ENCODE measurements at regions of chr5 and their contacts with region 1.

Region 1: DNA sequence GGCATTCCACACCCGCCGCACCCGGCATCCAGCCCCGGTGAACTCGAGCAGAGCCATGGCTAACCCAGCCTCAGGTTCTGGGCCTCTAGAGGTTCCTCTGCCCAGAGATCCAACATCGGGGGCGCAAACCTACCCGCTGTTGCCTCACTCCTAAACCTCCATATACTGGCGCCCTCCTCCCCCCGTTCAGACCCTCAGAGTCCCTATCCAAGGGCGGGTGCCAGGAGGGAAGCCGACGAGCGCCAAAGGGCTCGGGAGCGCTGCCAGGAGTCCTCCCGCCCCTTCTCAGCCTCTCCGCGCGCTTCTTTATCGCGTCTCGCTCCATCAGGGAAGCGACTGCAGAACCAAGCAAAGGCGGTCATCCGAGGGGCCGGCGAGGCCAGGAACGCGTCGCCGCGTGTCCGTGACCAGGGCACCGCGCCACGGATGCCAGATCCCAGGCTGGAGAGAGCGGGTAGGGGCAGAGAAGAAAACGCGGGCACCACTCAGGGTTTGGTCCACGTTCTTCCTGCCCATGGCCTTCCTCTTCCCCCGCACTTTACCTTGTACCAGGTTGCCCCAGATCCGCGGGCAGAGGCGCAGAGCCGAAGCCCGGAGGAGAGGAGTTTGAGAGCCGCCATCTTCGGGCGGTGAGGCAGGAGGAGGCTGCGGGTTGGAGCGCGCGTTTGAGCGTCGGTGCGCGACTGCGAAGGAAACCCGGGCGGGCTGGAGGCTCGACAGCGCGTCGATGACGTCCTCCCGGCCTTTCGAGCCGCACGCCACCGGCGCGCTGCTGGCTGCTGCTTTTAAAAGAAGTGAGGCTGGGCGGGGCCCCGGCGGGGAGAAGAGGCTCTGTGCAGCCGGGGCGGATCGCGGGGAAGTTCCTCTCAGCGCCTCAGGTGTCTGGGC is at the start of gene OXCT1:
- DNase-seq: peak; percentile 76 to 89
- H3K4me3 ChIP-seq: peak within 1 kb of the TSS; percentile 67 to 83
- H3K27ac ChIP-seq: peak within 1 kb of the TSS; percentile 92 to 94
- H3K4me1 ChIP-seq: peaks cover 0 to 42% (median 13%) of the 10 kb centered on the region in 4 donors
- H3K27me3 ChIP-seq: no peaks in the 10 kb centered on the region
- CTCF ChIP-seq: no peak

Region 2: GRCh38 chr5:41312478-41313060 is 557.4 kb before region 1 on chr5:
- intact Hi-C with region 1: no loop called
- DNase-seq: no peak
- H3K4me3 ChIP-seq: no peak overlapping the region
- H3K27ac ChIP-seq: no peak overlapping the region
- H3K4me1 ChIP-seq: no peaks in the 10 kb centered on the region
- H3K27me3 ChIP-seq: no peaks in the 10 kb centered on the region
- CTCF ChIP-seq: no peak

Region 3: GRCh38 chr5:41903892-41904799 is 34.2 kb after region 1 on chr5 and contains the start of gene RIMOC1:
- intact Hi-C with region 1: loop called (anchors 2 kb)
- DNase-seq: peak; percentile 98 to 100
- H3K4me3 ChIP-seq: peak within 1 kb of the TSS; percentile 81 to 91
- H3K27ac ChIP-seq: peak within 1 kb of the TSS; percentile 94
- H3K4me1 ChIP-seq: peaks cover 0 to 33% (median 14%) of the 10 kb centered on the region in 4 donors
- H3K27me3 ChIP-seq: no peaks in the 10 kb centered on the region
- CTCF ChIP-seq: no peak

Region 4: GRCh38 chr5:41924872-41925554 is 55.0 kb after region 1 on chr5 and contains the start of gene FBXO4:
- intact Hi-C with region 1: loop called (anchors 5 kb)
- DNase-seq: peak; percentile 80 to 92
- H3K4me3 ChIP-seq: peak within 1 kb of the TSS; percentile 87 to 90
- H3K27ac ChIP-seq: peak within 1 kb of the TSS; percentile 98 to 99
- H3K4me1 ChIP-seq: peaks cover 0 to 12% (median 7%) of the 10 kb centered on the region in 4 donors
- H3K27me3 ChIP-seq: no peaks in the 10 kb centered on the region
- CTCF ChIP-seq: peak; percentile 25 to 59

Region 5: DNA sequence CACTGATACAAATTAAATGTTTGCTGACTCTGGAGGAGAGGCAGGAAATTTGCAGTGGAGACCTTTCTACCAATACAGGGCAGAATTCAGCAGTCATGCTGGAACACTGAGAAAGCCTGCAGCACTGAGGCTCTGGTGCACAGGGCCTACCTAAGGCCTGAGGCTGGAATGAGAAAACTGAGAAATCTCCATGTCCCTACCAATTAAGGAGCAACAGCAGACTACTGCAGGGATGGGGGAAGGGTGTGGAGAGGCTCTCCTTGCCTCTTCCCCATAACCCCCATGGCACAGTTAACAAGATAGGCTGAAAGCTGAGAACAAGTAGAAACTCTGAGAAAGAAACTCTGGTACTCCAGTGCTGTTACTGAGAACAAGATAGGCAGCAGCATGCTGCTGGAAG is 65.6 kb after region 1 on chr5:
- intact Hi-C with region 1: no loop called
- DNase-seq: no peak
- H3K4me3 ChIP-seq: no peak overlapping the region
- H3K27ac ChIP-seq: no peak overlapping the region
- H3K4me1 ChIP-seq: no peaks in the 10 kb centered on the region
- H3K27me3 ChIP-seq: no peaks in the 10 kb centered on the region
- CTCF ChIP-seq: no peak